ENCODE measurements at regions of chr20 and their contacts with region 1.

Region 1: DNA sequence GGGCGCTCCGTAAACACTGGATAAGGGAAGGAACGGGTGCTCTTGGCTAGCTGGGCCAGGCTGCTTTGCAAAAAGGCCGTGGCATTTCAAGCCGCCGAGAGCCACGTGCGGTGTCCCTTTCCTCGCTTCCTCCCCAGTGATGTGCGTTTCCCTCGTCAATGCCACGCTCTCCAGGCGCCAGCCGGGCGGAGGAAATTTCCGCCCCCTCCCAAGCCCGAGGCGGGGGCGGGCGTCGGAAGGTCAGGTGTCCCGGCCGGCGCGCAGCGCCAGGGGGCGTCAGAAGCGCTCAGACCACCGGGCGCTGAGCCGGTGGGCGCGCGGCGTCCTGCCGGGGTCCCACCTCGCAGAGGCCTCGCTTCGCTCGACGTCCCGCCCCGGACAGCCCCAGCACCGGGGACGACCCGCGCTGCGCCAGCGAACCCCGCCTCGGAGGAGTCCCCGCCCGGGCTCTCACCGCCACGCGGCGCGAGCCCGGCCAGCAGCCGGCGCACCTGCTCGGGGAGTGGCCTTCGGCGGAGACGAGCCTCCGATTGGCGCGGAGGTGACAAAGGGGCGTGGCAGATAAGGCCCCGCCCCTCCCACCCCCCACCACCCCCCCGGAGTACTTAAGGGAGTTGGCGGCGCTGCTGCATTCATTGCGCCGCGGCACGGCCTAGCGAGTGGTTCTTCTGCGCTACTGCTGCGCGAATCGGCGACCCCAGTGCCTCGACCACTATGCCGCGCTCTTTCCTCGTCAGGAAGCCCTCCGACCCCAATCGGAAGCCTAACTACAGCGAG is at the start of gene SNAI1:
- DNase-seq: peak; percentile 32
- ATAC-seq: peak; percentile 96
- H3K4me3 ChIP-seq: peak within 1 kb of the TSS; percentile 58
- H3K27ac ChIP-seq: no peak within 1 kb of the TSS
- H3K4me1 ChIP-seq: no peaks in the 10 kb centered on the region; the same call in 1 of the 2 replicates
- H3K27me3 ChIP-seq: no peaks in the 10 kb centered on the region
- CTCF ChIP-seq: peak; percentile 40 to 51 (median 42); a peak in 5 of 6 replicates
- EP300 ChIP-seq: no peak
- POLR2A ChIP-seq: peak; percentile 97
- RAD21 ChIP-seq: no peak
- polyA plus RNA-seq, gene SNAI1: not detected

Region 2: DNA sequence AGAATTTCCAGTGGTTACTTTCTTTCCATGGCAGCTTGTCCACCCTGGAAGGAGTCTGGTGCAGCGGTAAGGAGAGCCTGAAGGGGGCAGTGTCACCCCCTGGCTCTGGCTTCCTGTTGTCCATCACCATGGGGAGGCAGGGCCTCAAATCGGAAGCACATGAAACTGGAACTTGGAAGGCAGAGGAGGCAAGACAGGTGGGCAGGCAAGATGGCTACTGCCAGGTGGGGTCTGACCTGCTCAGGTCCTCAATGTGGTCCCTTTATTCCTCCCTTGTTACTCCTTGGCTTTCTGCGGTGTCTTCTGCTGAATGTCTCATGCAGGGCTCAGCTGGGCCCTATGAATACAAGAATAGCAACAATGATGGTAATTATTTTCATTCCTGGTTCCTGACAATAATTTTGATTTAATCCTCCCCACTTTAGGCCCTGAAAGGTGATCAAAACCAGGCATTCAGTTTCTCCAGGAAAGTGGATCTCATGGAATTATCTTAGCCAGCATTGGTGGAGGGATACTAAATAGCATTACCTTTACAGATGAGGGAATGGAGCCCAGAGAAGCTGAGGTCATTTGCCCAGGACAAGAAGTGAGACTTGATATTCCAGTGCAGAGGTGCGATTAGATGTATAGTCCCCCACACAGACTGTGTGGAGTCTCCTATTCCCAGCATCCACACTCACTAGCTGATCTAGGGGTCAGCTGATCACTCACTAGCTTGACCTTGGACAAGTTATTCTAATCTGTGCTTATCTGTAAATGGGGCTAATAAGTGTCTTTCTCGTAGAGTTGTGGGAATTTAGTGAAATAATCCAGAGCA is 17.4 kb before region 1 on chr20:
- CTCF ChIA-PET with region 1: interaction called, 27 read pairs
- POLR2A ChIA-PET with region 1: no interaction called
- RAD21 ChIA-PET with region 1: interaction called, 4 read pairs
- SMC1A ChIA-PET with region 1: interaction called, 4 read pairs
- in situ Hi-C with region 1: no loop called
- intact Hi-C with region 1: no loop called
- DNase-seq: no peak
- ATAC-seq: peak; percentile 83
- H3K4me3 ChIP-seq: no peak overlapping the region
- H3K27ac ChIP-seq: no peak overlapping the region
- H3K4me1 ChIP-seq: no peaks in the 10 kb centered on the region
- H3K27me3 ChIP-seq: no peaks in the 10 kb centered on the region
- CTCF ChIP-seq: peak; percentile 46 to 72 (median 68)
- EP300 ChIP-seq: no peak
- POLR2A ChIP-seq: no peak
- RAD21 ChIP-seq: no peak; the same call in 1 of the 2 replicates

Region 3: GRCh38 chr20:50003253-50003656 is 20.7 kb after region 1 on chr20:
- CTCF ChIA-PET with region 1: interaction called, 16 read pairs
- POLR2A ChIA-PET with region 1: interaction called, 3 read pairs
- RAD21 ChIA-PET with region 1: interaction called, 8 read pairs
- SMC1A ChIA-PET with region 1: interaction called, 6 read pairs
- in situ Hi-C with region 1: no loop called
- intact Hi-C with region 1: no loop called
- DNase-seq: no peak
- ATAC-seq: no peak
- H3K4me3 ChIP-seq: no peak overlapping the region
- H3K27ac ChIP-seq: no peak overlapping the region
- H3K4me1 ChIP-seq: peaks cover 13% of the 10 kb centered on the region
- H3K27me3 ChIP-seq: no peaks in the 10 kb centered on the region
- CTCF ChIP-seq: no peak
- EP300 ChIP-seq: no peak
- POLR2A ChIP-seq: no peak
- RAD21 ChIP-seq: no peak

Region 4: DNA sequence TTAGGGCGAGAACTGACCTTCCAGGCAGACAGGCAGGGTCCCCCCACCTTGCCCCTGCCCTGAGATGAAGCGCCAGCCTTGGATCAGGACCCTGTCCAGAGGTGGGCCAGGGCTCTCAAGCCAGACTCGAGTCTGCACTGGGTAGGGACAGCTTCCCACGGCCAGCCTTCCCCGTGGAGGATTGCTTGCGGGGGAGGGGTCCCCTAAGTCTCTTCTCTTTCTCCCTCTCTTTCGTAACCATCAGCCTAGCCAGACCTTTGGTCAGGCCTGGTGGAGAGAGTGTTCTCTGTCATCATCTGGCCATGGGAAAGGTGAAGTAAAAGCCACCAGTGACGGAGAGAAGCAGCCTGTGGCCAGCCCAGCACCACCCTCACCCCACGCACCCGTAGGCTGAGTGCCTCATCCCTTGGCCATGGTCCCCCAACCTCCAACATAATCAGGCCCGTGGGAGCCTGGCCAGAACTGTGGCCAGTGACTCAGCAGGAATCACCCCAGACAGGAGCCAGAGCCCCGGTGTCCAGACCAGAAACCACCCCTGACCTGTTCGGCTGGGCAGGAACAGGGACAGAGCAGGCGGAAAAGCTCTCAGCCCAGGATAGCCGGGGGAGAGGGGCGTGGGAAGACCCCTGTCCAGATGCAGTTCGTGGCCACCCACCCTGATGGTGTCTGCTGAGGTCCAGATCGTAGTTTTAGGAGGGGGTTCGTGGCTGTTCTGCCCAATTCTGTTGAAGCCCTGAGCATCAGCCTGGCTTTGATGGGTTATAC is 47.3 kb after region 1 on chr20:
- CTCF ChIA-PET with region 1: no interaction called
- POLR2A ChIA-PET with region 1: no interaction called
- RAD21 ChIA-PET with region 1: no interaction called
- SMC1A ChIA-PET with region 1: no interaction called
- in situ Hi-C with region 1: no loop called
- intact Hi-C with region 1: no loop called
- DNase-seq: no peak
- ATAC-seq: peak; percentile 28; the same call in 2 of the 3 replicates
- H3K4me3 ChIP-seq: no peak overlapping the region
- H3K27ac ChIP-seq: no peak overlapping the region
- H3K4me1 ChIP-seq: no peaks in the 10 kb centered on the region
- H3K27me3 ChIP-seq: peaks cover 0 to 2% of the 10 kb centered on the region in 2 experiments; a peak in 1 of 4 replicates
- CTCF ChIP-seq: no peak
- EP300 ChIP-seq: no peak
- POLR2A ChIP-seq: no peak
- RAD21 ChIP-seq: no peak

Region 5: GRCh38 chr20:50138479-50139393 is 156.2 kb after region 1 on chr20:
- CTCF ChIA-PET with region 1: no interaction called
- POLR2A ChIA-PET with region 1: no interaction called
- RAD21 ChIA-PET with region 1: no interaction called
- SMC1A ChIA-PET with region 1: no interaction called
- in situ Hi-C with region 1: no loop called
- intact Hi-C with region 1: no loop called
- DNase-seq: no peak
- ATAC-seq: no peak
- H3K4me3 ChIP-seq: no peak overlapping the region
- H3K27ac ChIP-seq: no peak overlapping the region
- H3K4me1 ChIP-seq: no peaks in the 10 kb centered on the region
- H3K27me3 ChIP-seq: no peaks in the 10 kb centered on the region
- CTCF ChIP-seq: no peak
- EP300 ChIP-seq: no peak
- POLR2A ChIP-seq: no peak
- RAD21 ChIP-seq: no peak

Region 6: DNA sequence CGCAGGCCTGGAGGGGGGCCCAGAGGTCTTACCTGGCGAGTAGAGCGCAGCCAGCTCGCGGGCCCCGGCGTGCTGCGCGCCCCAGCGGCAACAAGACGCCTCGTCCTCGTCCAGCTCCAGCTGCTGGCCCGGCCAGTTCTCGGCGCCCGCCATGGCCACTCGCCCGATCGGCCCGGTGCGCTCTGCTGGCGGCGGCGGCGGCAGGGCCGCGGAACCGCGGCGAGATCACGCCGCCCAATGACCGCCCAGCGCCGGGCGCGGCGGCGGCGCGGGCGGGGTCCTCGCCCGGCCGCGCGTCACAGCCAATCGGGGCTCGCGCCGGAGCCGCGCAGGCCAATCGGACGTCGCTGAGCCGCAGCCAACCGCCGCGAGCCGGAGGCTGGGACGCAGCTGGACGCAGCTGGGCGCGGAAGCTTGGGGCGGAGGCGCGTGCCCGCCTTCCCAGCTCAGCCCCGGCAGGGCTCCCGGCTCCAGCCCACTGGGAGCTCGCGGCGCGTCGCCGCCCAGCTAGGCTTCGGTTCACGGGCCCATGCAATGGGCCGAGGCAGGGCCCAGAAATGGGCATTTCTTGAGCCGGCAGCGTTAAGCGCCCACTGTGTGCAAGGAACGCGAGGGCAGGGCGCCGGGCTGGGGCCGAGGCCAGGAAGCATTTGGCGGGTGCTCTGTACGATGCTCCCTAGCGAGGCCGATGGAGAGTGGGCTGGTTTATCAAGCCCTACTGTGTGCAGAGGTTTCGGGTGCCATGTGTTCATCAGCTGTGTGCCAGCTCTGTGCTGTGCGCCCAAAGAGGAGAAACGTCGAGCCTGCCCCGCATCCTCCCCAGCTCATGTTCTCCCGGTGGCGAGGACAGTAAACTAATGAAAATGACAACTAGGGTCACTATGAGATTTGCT is 171.2 kb after region 1 on chr20 and contains the start of gene PEDS1:
- CTCF ChIA-PET with region 1: interaction called, 6 read pairs
- POLR2A ChIA-PET with region 1: no interaction called
- RAD21 ChIA-PET with region 1: interaction called, 13 read pairs
- SMC1A ChIA-PET with region 1: interaction called, 5 read pairs
- in situ Hi-C with region 1: no loop called
- intact Hi-C with region 1: no loop called
- DNase-seq: peak; percentile 45
- ATAC-seq: peak; percentile 98
- H3K4me3 ChIP-seq: peak within 1 kb of the TSS; percentile 98
- H3K27ac ChIP-seq: peak within 1 kb of the TSS; percentile 75
- H3K4me1 ChIP-seq: peaks cover 8% of the 10 kb centered on the region
- H3K27me3 ChIP-seq: no peaks in the 10 kb centered on the region
- CTCF ChIP-seq: no peak
- EP300 ChIP-seq: 0 out of 4 replicates have a peak, but pooled peaks of 1 of the 2 experiments have one; percentile 17
- POLR2A ChIP-seq: peak; percentile 94
- RAD21 ChIP-seq: no peak
- polyA plus RNA-seq, gene PEDS1: 1.7 to 4.3 TPM

Region 7: DNA sequence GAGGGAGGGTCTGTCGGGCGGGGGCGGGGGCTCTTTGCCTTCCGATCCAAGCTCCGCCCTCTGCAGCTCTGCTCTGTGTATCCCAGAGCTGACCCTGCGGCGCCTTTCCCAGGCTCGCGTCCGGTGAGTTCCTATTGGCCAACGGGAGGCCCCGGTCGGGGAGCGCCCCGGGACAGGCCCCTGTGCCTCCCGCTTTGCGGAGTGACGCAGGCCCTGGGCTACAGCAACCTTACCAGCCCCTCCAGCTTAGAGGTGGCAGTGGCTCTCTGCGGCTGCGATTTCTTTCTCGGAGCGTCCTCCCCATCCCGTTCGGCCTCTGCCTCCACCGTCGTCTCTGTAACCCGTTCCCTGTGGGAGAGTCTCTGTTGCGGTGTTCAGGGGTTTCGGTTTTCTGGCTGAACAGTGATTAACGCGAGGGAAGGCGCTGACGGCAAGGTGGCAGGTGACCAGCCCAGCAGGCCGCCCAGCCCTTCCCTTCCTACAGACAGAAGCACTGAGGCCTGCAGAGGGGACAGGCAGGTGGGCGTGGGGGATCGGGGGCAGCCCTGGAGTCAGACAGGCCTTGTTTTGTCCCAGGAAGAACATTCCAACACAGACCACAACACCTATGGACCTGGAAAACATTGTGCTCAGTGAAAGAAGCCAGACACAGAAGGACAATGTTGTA is 189.9 kb after region 1 on chr20:
- CTCF ChIA-PET with region 1: interaction called, 37 read pairs
- POLR2A ChIA-PET with region 1: no interaction called
- RAD21 ChIA-PET with region 1: interaction called, 10 read pairs
- SMC1A ChIA-PET with region 1: interaction called, 8 read pairs
- in situ Hi-C with region 1: loop called (anchors 5 kb)
- intact Hi-C with region 1: loop called (anchors 2 kb)
- DNase-seq: no peak
- ATAC-seq: peak; percentile 62
- H3K4me3 ChIP-seq: no peak overlapping the region
- H3K27ac ChIP-seq: no peak overlapping the region
- H3K4me1 ChIP-seq: no peaks in the 10 kb centered on the region
- H3K27me3 ChIP-seq: no peaks in the 10 kb centered on the region
- CTCF ChIP-seq: no peak
- EP300 ChIP-seq: no peak
- POLR2A ChIP-seq: no peak
- RAD21 ChIP-seq: no peak

Region 8: GRCh38 chr20:50179507-50180016 is 197.0 kb after region 1 on chr20:
- CTCF ChIA-PET with region 1: interaction called, 24 read pairs
- POLR2A ChIA-PET with region 1: no interaction called
- RAD21 ChIA-PET with region 1: interaction called, 4 read pairs
- SMC1A ChIA-PET with region 1: no interaction called
- in situ Hi-C with region 1: no loop called
- intact Hi-C with region 1: no loop called
- DNase-seq: no peak
- ATAC-seq: peak; percentile 44
- H3K4me3 ChIP-seq: no peak overlapping the region
- H3K27ac ChIP-seq: no peak overlapping the region
- H3K4me1 ChIP-seq: no peaks in the 10 kb centered on the region
- H3K27me3 ChIP-seq: no peaks in the 10 kb centered on the region
- CTCF ChIP-seq: no peak
- EP300 ChIP-seq: no peak
- POLR2A ChIP-seq: no peak
- RAD21 ChIP-seq: no peak

Measured in GM12878 (cell line).